Mammary epithelial cell (primary cell): ENCODE measurements at regions of chr14 and their contacts with region 1.

Region 1: DNA sequence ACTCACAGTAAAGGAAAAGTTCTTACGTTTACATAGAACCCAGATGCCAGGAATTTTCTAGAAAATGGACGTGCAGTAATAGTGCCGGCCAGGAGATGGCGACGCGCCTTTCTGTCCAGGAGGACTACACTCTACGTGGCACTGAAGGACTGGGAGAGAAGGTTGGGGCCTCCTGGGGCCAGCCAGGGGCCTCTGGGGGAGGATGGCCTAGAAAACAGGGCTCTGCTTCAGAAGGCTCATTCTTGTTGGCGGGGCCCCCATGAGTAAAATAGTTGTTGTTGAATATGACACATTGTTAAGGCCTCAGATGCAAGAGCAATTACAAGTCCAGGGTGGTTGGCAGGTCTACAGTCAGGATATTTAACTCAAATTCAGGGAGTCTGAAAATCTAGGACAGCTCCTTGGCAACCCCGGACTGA is 120.1 kb upstream of the MAX start:
- DNase-seq: peak; percentile 46
- H3K4me3 ChIP-seq: no peak overlapping the region
- H3K27ac ChIP-seq: no peak overlapping the region
- H3K4me1 ChIP-seq: peaks cover 11% of the 10 kb centered on the region
- H3K27me3 ChIP-seq: no peaks in the 10 kb centered on the region
- CTCF ChIP-seq: peak; percentile 90 to 92

Region 2: GRCh38 chr14:64928239-64929013 is 294.0 kb before region 1 on chr14:
- CTCF ChIA-PET with region 1: no interaction called
- dilution Hi-C with region 1: no loop called
- in situ Hi-C with region 1: no loop called
- intact Hi-C with region 1: no loop called
- DNase-seq: no peak
- H3K4me3 ChIP-seq: no peak overlapping the region
- H3K27ac ChIP-seq: no peak overlapping the region
- H3K4me1 ChIP-seq: no peaks in the 10 kb centered on the region
- H3K27me3 ChIP-seq: no peaks in the 10 kb centered on the region
- CTCF ChIP-seq: no peak

Region 3: DNA sequence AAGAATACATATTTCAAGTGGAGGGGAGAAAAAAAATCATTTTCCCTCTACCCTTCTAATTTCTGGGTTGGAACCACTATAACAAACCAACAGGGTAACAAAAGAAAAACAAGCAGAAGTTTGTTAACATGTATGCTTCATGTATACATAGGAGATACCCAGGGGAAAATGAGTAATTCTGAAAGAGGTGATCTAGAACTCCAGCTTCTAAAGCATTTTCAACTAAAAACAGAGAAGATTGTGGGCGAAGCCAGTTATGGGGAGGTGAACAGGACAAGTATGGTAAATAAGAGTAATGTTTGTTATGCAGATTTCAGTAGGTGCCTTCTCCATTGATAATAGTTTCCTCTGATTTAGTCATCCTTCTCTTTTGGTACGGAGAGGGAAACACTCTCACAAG is 219.1 kb before region 1 on chr14:
- CTCF ChIA-PET with region 1: no interaction called
- dilution Hi-C with region 1: no loop called
- in situ Hi-C with region 1: no loop called
- intact Hi-C with region 1: no loop called
- DNase-seq: no peak
- H3K4me3 ChIP-seq: no peak overlapping the region
- H3K27ac ChIP-seq: no peak overlapping the region
- H3K4me1 ChIP-seq: peaks cover 32% of the 10 kb centered on the region
- H3K27me3 ChIP-seq: no peaks in the 10 kb centered on the region
- CTCF ChIP-seq: no peak

Region 4: DNA sequence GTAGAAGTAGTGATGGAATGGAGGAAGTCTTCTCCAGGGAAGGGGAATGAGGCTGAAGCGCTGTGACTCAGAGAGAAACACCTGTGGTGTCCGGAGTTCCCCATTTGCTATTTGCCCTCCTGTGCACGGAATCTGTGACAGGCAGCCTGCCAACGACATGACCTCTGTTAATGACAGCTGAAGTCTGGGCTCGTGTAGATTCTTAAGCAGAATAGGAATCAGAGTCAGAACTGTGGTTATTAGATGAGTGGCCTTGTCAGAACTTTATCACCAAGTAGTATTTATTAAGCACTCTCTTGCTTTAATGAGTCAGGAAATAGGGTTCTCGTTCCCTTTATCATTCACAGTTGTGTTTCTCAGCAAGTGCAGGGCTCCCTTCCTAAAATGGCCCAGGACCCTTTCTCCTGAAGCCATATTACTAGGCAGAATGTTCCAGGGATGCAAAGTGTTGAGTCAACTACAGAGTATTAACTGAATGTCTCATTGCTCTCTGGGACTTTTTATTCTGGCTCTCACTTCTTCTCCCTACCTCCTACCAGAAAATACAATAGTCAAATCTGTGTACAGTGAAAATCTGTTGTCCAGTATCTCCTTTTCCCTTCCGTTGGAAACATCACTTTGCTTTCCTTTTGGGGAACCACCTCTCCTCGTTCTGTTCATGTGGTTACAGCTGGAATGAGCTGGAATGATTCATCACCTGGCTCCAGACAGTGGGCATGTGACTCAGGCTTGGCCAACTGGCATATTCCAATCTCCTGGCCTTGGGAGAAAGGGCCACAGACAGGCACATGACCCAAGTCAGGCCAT is 42.3 kb before region 1 on chr14:
- CTCF ChIA-PET with region 1: no interaction called
- dilution Hi-C with region 1: no loop called
- in situ Hi-C with region 1: no loop called
- intact Hi-C with region 1: no loop called
- DNase-seq: peak; percentile 98
- H3K4me3 ChIP-seq: no peak overlapping the region
- H3K27ac ChIP-seq: peak overlapping the region; percentile 86
- H3K4me1 ChIP-seq: peaks cover 25% of the 10 kb centered on the region
- H3K27me3 ChIP-seq: no peaks in the 10 kb centered on the region
- CTCF ChIP-seq: no peak

Region 5: GRCh38 chr14:65361920-65362319 is 139.5 kb after region 1 on chr14:
- CTCF ChIA-PET with region 1: interaction called, 5 read pairs
- dilution Hi-C with region 1: no loop called
- in situ Hi-C with region 1: loop called in 1 of 2 experiments (anchors 10 kb)
- intact Hi-C with region 1: loop called (anchors 5 kb)
- DNase-seq: peak; percentile 81
- H3K4me3 ChIP-seq: no peak overlapping the region
- H3K27ac ChIP-seq: no peak overlapping the region
- H3K4me1 ChIP-seq: peaks cover 24% of the 10 kb centered on the region
- H3K27me3 ChIP-seq: no peaks in the 10 kb centered on the region
- CTCF ChIP-seq: no peak

Region 6: DNA sequence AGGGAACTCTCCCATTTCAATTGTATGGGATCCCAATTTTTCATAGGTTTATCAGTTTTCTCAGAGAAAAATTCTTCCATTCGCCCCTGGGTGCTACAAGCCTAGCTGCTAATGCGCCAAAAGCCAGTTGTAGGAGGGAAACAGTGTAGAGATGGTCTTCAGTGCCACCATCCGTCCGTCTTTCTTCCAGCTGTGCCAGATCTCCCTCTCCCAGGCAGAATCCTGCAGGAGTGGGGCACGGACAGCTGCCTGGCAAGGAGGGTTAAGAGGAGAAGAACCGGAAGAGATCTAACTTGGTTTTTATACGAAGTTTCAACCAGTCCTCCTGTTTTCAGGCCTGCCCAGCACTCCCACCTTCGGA is 151.2 kb after region 1 on chr14:
- CTCF ChIA-PET with region 1: no interaction called
- dilution Hi-C with region 1: no loop called
- in situ Hi-C with region 1: loop called in 1 of 2 experiments (anchors 10 kb)
- intact Hi-C with region 1: loop called (anchors 1 kb)
- DNase-seq: peak; percentile 24
- H3K4me3 ChIP-seq: peak overlapping the region in 2 of 3 experiments; percentile 21 to 36
- H3K27ac ChIP-seq: no peak overlapping the region
- H3K4me1 ChIP-seq: peaks cover 3% of the 10 kb centered on the region
- H3K27me3 ChIP-seq: no peaks in the 10 kb centered on the region
- CTCF ChIP-seq: peak in 1 of 2 donors; percentile 34

Region 7: DNA sequence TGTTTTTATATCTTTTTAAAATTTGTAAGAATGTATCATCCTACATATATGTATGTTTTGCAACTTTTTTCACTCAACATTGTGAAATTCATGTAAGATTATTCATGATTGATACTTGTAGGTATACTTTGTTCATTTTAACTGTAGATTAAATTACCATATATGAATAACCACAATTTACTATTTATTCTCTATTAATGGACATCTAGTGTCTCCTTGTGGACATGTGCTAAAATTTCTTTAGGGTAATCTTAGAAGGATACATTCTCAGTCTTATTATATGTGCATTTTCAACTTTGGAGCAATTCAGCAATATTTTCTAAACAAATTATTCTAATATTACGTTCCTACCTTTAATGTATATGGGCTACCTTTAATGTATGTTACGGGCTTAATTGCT is 382.5 kb after region 1 on chr14:
- CTCF ChIA-PET with region 1: no interaction called
- dilution Hi-C with region 1: no loop called
- in situ Hi-C with region 1: no loop called
- intact Hi-C with region 1: loop called (anchors 1 kb)
- DNase-seq: no peak
- H3K4me3 ChIP-seq: no peak overlapping the region
- H3K27ac ChIP-seq: no peak overlapping the region
- H3K4me1 ChIP-seq: no peaks in the 10 kb centered on the region
- H3K27me3 ChIP-seq: no peaks in the 10 kb centered on the region
- CTCF ChIP-seq: peak; percentile 11 to 35

Region 8: GRCh38 chr14:65940056-65940733 is 717.7 kb after region 1 on chr14:
- CTCF ChIA-PET with region 1: no interaction called
- dilution Hi-C with region 1: no loop called
- in situ Hi-C with region 1: no loop called
- intact Hi-C with region 1: no loop called
- DNase-seq: no peak
- H3K4me3 ChIP-seq: no peak overlapping the region
- H3K27ac ChIP-seq: no peak overlapping the region
- H3K4me1 ChIP-seq: no peaks in the 10 kb centered on the region
- H3K27me3 ChIP-seq: no peaks in the 10 kb centered on the region
- CTCF ChIP-seq: peak; percentile 27 to 30